ENCODE measurements at regions of chr19 and their contacts with region 1.

Region 1: DNA sequence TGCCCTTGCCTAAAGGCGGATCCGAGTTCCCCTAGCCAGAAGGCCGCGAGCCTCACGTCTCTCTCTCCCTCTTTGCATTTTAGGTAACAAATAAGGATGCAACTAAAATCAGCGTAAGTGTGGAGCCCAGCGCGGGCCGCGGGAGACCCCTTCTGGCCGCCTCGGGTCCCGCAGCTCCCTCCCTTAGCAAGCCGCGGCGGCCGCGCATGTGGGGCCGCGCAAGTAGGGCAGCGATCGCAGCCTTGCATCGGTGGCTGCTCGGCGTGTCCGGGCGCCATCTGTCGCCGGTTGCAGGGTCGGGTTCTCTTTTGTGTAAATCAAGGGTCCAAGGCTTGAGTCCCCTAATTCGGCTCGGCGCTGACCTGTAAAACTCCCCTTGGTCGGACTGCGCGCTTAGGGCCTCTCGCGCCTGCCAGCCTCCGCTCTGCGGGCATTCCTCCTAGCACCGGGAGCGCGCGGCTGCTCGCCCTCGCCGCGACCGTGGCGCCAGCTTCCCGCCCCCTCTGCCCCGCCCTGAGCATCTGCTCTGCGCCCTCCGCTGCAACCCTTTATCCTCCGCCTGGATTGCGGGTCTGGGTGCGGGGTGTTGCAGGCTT is 2.7 kb downstream of the VSTM2B start:
- DNase-seq: peak; percentile 75 to 91
- H3K4me3 ChIP-seq: peak overlapping the region; percentile 21 to 65 (median 54); a peak in 7 of 8 replicates
- H3K27ac ChIP-seq: no peak overlapping the region
- H3K4me1 ChIP-seq: peaks cover 6 to 45% (median 12%) of the 10 kb centered on the region in 4 experiments; a peak in 6 of 7 replicates
- H3K27me3 ChIP-seq: peaks cover 47 to 83% (median 75%) of the 10 kb centered on the region in 4 experiments
- CTCF ChIP-seq: peak; percentile 72 to 82 (median 76)
- EP300 ChIP-seq: no peak
- POLR2A ChIP-seq: no peak
- RAD21 ChIP-seq: peak; percentile 87 to 89

Region 2: DNA sequence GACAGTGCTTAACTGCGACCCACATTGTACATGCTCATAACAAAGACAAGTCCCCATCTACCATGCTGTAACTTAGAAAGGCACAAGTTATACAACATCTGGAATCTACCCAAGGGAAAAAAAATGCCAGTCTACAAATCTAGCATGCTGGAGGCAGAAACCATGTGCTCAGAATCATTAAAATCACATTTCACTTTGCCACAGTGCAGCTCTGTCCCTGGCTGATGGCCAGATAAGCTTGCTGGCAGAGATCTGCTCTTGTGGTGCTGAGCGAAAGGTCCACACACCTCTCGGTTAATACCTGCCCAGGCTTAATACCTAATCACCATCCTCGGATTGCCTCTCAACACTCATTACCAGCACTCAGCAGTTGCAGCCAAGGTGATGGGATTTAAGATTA is 241.4 kb before region 1 on chr19:
- CTCF ChIA-PET with region 1: interaction called, 21 read pairs
- POLR2A ChIA-PET with region 1: no interaction called
- DNase-seq: no peak
- H3K4me3 ChIP-seq: no peak overlapping the region
- H3K27ac ChIP-seq: no peak overlapping the region
- H3K4me1 ChIP-seq: peaks cover 0 to 2% (median 0%) of the 10 kb centered on the region in 4 experiments; a peak in 3 of 7 replicates
- H3K27me3 ChIP-seq: no peaks in the 10 kb centered on the region; a peak in 1 of 7 replicates
- CTCF ChIP-seq: no peak
- EP300 ChIP-seq: no peak
- POLR2A ChIP-seq: no peak
- RAD21 ChIP-seq: no peak

Region 3: DNA sequence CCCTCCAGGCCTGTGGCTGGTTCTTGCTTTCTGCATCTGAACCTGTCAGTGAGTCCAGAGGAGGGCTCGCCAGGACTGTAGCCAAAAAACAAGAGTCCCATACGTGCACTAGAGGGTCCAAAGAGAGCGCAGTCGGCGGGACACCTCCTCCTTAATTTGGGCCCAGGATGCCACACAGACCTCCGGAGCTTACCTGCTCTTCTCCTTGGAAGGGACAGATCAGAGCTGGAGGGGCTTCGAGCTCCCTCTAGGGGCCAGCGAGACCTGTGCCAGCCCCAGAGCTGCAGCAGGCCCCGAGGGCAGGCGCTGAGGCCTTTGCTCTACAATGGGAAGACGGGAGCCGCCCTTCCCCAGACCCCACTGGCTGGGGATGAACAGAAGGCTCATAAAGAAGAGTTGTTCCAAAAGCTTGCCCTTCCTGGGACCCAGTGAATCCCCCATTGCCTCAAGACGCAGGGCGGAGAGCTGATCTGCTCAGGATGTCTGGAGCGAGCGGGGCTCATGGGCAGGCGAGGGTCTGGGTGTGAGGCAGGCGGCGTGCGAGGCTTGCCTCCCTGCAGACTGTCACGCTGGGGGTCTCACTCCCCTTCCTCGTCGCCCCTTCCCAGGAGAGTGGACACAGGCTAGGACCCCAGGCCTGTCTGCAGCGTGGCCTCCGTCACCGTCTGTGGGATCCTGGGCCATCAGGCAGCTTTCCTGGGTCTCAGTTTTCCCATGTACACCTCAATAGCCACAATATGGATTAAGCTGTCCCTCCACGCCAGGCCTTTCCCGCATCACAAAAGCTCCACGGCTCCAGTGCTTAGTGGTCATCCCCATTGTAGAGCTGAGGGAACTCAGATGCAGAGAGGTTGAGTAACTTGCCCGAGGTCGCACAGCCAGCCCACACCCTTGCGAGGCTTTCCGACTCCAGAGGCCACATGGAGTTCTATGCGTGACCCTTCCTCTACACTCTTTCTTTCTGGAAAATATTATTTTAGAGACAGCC is 49.6 kb before region 1 on chr19:
- CTCF ChIA-PET with region 1: interaction called, 14 read pairs
- POLR2A ChIA-PET with region 1: no interaction called
- DNase-seq: peak; percentile 69 to 85
- H3K4me3 ChIP-seq: no peak overlapping the region
- H3K27ac ChIP-seq: no peak overlapping the region
- H3K4me1 ChIP-seq: peaks cover 0 to 4% (median 3%) of the 10 kb centered on the region in 4 experiments; a peak in 2 of 7 replicates
- H3K27me3 ChIP-seq: no peaks in the 10 kb centered on the region; a peak in 1 of 7 replicates
- CTCF ChIP-seq: peak; percentile 83 to 92 (median 87)
- EP300 ChIP-seq: no peak
- POLR2A ChIP-seq: no peak
- RAD21 ChIP-seq: peak; percentile 83 to 88

Region 4: GRCh38 chr19:29510701-29511265 is 17.7 kb before region 1 on chr19:
- CTCF ChIA-PET with region 1: interaction called, 12 read pairs
- POLR2A ChIA-PET with region 1: interaction called, 3 read pairs
- DNase-seq: no peak
- H3K4me3 ChIP-seq: no peak overlapping the region
- H3K27ac ChIP-seq: no peak overlapping the region
- H3K4me1 ChIP-seq: peaks cover 0 to 12% (median 3%) of the 10 kb centered on the region in 4 experiments; a peak in 3 of 7 replicates
- H3K27me3 ChIP-seq: no peaks in the 10 kb centered on the region; a peak in 1 of 7 replicates
- CTCF ChIP-seq: no peak
- EP300 ChIP-seq: no peak
- POLR2A ChIP-seq: no peak
- RAD21 ChIP-seq: no peak